Endothelial cell of umbilical vein (primary cell): ENCODE measurements at regions of chr19 and their contacts with region 1.

Region 1: GRCh38 chr19:3012621-3013260 is 16.3 kb downstream of the TLE2 start:
- DNase-seq: no peak
- H3K4me3 ChIP-seq: no peak overlapping the region
- H3K27ac ChIP-seq: no peak overlapping the region
- H3K4me1 ChIP-seq: no peaks in the 10 kb centered on the region
- H3K27me3 ChIP-seq: no peaks in the 10 kb centered on the region
- CTCF ChIP-seq: no peak
- POLR2A ChIP-seq: no peak

Region 2: GRCh38 chr19:3029065-3029923 is 16.6 kb after region 1 on chr19 and contains the start of gene TLE2:
- CTCF ChIA-PET with region 1: interaction called, 11 read pairs
- POLR2A ChIA-PET with region 1: no interaction called
- dilution Hi-C with region 1: no loop called
- intact Hi-C with region 1: no loop called
- DNase-seq: peak; percentile 25
- H3K4me3 ChIP-seq: peak within 1 kb of the TSS; percentile 63 to 84 (median 81)
- H3K27ac ChIP-seq: no peak within 1 kb of the TSS
- H3K4me1 ChIP-seq: peaks cover 2% of the 10 kb centered on the region
- H3K27me3 ChIP-seq: peaks cover 1 to 8% of the 10 kb centered on the region in 2 experiments
- CTCF ChIP-seq: peak in 1 of 2 donors; percentile 2
- POLR2A ChIP-seq: no peak
- total RNA-seq, gene TLE2: 38.8 and 42.5 TPM in 2 replicates